ENCODE measurements at regions of chr3 and their contacts with region 1.

Region 1: GRCh38 chr3:85790445-85791030 is 831.7 kb downstream of the CADM2 start:
- DNase-seq: no peak
- H3K4me3 ChIP-seq: no peak overlapping the region
- H3K4me1 ChIP-seq: peaks cover 4% of the 10 kb centered on the region
- H3K27me3 ChIP-seq: no peaks in the 10 kb centered on the region

Region 2: DNA sequence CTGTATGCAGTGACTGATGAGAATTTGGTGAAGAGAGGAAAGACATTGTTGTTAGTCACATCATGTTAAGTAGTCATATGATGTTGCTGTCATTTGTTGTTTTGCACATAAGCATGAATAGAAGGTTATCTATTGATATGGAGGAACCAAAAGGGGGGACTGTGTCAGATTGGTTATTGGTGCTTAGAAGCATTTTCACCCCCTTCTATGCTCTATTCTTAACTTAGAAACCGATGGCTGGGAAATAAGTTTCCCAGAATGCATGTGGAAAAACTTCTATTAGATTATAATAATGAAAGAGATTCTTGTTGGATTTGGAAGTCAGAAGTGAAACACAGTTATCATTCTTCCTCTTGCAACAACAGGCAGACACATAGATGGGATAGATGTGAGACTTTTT is 865.0 kb before region 1 on chr3:
- in situ Hi-C with region 1: no loop called
- DNase-seq: no peak
- H3K4me3 ChIP-seq: no peak overlapping the region
- H3K4me1 ChIP-seq: no peaks in the 10 kb centered on the region
- H3K27me3 ChIP-seq: no peaks in the 10 kb centered on the region

Region 3: GRCh38 chr3:85589145-85589544 is 201.4 kb before region 1 on chr3:
- in situ Hi-C with region 1: loop called (anchors 10 kb)
- DNase-seq: no peak
- H3K4me3 ChIP-seq: no peak overlapping the region
- H3K4me1 ChIP-seq: peaks cover 5% of the 10 kb centered on the region; the same call in 1 of the 2 replicates
- H3K27me3 ChIP-seq: no peaks in the 10 kb centered on the region

Region 4: DNA sequence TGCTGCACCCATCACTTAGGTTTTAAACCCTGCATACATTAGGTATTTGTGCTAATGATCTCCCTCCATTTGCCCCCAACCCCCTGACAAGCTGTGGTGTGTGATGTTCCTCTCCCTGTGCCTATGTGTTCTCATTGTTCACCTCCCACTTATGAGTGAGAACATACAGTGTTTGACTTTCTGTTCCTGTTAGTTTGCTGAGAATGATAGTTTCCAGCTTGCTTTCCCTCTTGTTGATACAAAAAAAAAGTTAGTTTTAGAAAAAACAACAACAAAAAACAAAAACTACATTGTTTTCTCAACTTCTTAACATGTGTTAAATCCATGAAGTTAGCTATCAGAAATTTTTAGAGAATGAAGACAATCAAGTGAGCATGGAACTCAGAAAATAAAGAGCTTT is 247.4 kb after region 1 on chr3:
- in situ Hi-C with region 1: no loop called
- DNase-seq: no peak
- H3K4me3 ChIP-seq: no peak overlapping the region
- H3K4me1 ChIP-seq: no peaks in the 10 kb centered on the region
- H3K27me3 ChIP-seq: no peaks in the 10 kb centered on the region

Measured in HAP-1 (cell line).